Activated naive CD8-positive, alpha-beta T cell treated with anti-CD3 and anti-CD28 coated beads, Interleukin-2, amount 10 ng/mL, durations not matched to agents 7 days and 5 days (primary cell): ENCODE measurements at regions of chr10 and their contacts with region 1.

Region 1: GRCh38 chr10:73772280-73773151 is 9.3 kb upstream of the CHCHD1 start:
- DNase-seq: peak; percentile 90
- ATAC-seq: peak; percentile 76
- H3K4me3 Mint-ChIP-seq: peak overlapping the region; percentile 91
- H3K27ac Mint-ChIP-seq: peak overlapping the region; percentile 95
- H3K4me1 Mint-ChIP-seq: peaks cover 51% of the 10 kb centered on the region
- H3K27me3 Mint-ChIP-seq: no peaks in the 10 kb centered on the region

Region 2: GRCh38 chr10:73730153-73730906 is 42.2 kb before region 1 on chr10:
- POLR2A ChIA-PET with region 1: interaction called, 20 read pairs
- DNase-seq: peak; percentile 94
- ATAC-seq: peak; percentile 92
- H3K4me3 Mint-ChIP-seq: peak overlapping the region; percentile 99
- H3K27ac Mint-ChIP-seq: peak overlapping the region; percentile 97
- H3K4me1 Mint-ChIP-seq: peaks cover 15% of the 10 kb centered on the region
- H3K27me3 Mint-ChIP-seq: no peaks in the 10 kb centered on the region

Region 3: DNA sequence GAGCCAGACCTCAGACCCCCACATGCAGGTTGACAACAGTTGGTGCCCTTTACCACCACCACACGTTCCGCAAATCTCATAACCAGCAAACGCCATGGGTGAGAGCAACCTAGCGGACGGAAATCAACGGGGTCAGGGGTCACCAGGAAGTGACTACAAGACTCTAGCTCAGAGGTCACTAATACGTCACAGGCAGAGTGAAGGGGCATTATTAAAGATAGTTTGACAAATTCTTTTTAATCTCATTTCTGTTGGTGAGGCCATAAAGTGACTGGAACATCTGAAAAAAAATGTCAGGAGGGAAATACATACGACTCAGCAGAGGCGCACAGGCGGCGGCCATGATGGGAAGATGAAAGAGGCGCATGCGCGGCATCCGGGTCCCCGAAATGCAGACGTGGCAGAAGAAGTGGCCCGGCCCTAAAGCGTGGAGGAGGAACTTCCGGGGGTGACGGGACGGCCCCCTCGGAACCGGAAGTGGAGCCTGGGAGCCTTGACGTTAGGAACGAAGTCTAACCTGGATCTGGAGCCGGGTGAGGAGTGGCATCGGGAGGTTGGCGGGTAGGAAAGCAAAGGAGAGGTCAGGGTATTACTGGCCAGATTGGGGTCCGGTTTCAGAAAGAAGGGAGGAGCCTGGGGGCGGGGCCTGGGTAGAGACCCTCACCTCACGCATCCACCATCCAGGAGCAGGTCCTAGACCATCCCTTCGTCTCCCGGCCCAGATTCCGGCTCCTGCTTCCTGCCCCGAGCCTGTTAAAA is 28.4 kb before region 1 on chr10 and contains the start of gene SEC24C:
- POLR2A ChIA-PET with region 1: interaction called, 23 read pairs
- DNase-seq: peak; percentile 93
- ATAC-seq: peak; percentile 90
- H3K4me3 Mint-ChIP-seq: peak within 1 kb of the TSS; percentile 98
- H3K27ac Mint-ChIP-seq: peak within 1 kb of the TSS; percentile 98
- H3K4me1 Mint-ChIP-seq: peaks cover 22% of the 10 kb centered on the region
- H3K27me3 Mint-ChIP-seq: no peaks in the 10 kb centered on the region
- total RNA-seq, gene SEC24C: 96.3 to 96.7 TPM

Region 4: DNA sequence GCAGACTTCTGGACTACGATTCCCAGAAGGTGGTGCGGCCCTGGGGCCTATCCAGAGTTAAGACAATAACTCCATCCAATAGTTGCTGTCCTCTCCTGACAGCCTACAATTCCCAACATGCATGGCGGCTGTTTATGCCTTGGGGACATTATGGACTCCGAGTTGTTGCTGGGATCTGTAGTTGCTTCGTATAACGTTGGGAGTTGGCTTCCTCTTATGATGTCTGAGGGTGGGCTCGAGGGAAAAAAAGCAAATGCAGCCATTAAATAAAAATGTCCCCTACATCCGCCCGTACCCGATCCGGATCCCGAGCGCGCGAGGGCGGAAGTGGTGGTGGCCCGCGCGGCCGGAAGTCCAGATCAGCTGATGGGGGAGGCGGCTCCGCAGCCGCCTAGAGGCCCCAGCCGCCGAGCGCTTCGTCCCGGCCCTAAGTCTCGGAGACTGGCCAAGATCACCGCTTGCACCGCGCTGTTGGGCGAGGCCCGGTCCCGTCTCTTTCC is 12.8 kb after region 1 on chr10 and contains the start of gene ZSWIM8:
- POLR2A ChIA-PET with region 1: interaction called, 101 read pairs
- DNase-seq: peak; percentile 86
- ATAC-seq: peak; percentile 82
- H3K4me3 Mint-ChIP-seq: peak within 1 kb of the TSS; percentile 95
- H3K27ac Mint-ChIP-seq: peak within 1 kb of the TSS; percentile 92
- H3K4me1 Mint-ChIP-seq: peaks cover 36% of the 10 kb centered on the region
- H3K27me3 Mint-ChIP-seq: no peaks in the 10 kb centered on the region
- total RNA-seq, gene ZSWIM8: 93.4 to 95.2 TPM

Region 5: GRCh38 chr10:73810735-73811465 is 38.4 kb after region 1 on chr10:
- POLR2A ChIA-PET with region 1: interaction called, 32 read pairs
- DNase-seq: peak; percentile 82
- ATAC-seq: peak; percentile 28
- H3K4me3 Mint-ChIP-seq: peak overlapping the region; percentile 96
- H3K27ac Mint-ChIP-seq: peak overlapping the region; percentile 95
- H3K4me1 Mint-ChIP-seq: peaks cover 32% of the 10 kb centered on the region
- H3K27me3 Mint-ChIP-seq: no peaks in the 10 kb centered on the region

Region 6: DNA sequence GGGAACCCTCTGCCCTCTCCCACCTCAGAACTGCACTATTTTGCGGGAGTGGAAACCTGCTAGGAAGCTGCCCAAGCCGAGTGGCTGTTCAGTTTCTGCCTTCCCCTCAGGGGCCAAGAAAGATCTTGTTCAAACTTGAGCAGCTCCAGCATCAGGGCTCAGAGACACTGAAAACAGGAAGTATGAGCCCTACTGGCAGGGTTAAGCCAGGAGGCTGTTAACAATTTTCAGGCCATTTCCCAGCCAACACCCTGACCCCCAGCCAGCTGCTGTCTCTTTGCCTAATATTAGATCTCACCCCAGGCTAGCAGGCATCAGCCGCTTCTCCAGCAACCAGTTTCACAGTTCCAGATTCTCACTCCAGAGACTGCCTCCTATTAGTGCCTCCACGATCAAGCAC is 147.6 kb after region 1 on chr10:
- POLR2A ChIA-PET with region 1: no interaction called
- DNase-seq: no peak
- ATAC-seq: peak; percentile 41
- H3K4me3 Mint-ChIP-seq: no peak overlapping the region
- H3K27ac Mint-ChIP-seq: no peak overlapping the region
- H3K4me1 Mint-ChIP-seq: peaks cover 28% of the 10 kb centered on the region
- H3K27me3 Mint-ChIP-seq: peaks cover 42% of the 10 kb centered on the region